ENCODE measurements at regions of chr3 and their contacts with region 1.

Region 1: GRCh38 chr3:71875461-71875947 is 90.6 kb upstream of the PROK2 start:
- DNase-seq: peak; percentile 79
- H3K4me3 Mint-ChIP-seq: no peak overlapping the region
- H3K27ac Mint-ChIP-seq: no peak overlapping the region
- H3K4me1 Mint-ChIP-seq: no peaks in the 10 kb centered on the region
- H3K27me3 Mint-ChIP-seq: peaks cover 4% of the 10 kb centered on the region
- CTCF ChIP-seq: peak; percentile 87

Region 2: GRCh38 chr3:71657831-71658530 is 217.5 kb before region 1 on chr3:
- CTCF ChIA-PET with region 1: no interaction called
- POLR2A ChIA-PET with region 1: no interaction called
- intact Hi-C with region 1: no loop called
- DNase-seq: peak; percentile 97
- H3K4me3 Mint-ChIP-seq: peak overlapping the region; percentile 56
- H3K27ac Mint-ChIP-seq: peak overlapping the region; percentile 82
- H3K4me1 Mint-ChIP-seq: peaks cover 16% of the 10 kb centered on the region
- H3K27me3 Mint-ChIP-seq: no peaks in the 10 kb centered on the region
- CTCF ChIP-seq: no peak

Region 3: GRCh38 chr3:71742621-71743020 is 132.9 kb before region 1 on chr3:
- CTCF ChIA-PET with region 1: no interaction called
- POLR2A ChIA-PET with region 1: no interaction called
- intact Hi-C with region 1: no loop called
- DNase-seq: no peak
- H3K4me3 Mint-ChIP-seq: no peak overlapping the region
- H3K27ac Mint-ChIP-seq: no peak overlapping the region
- H3K4me1 Mint-ChIP-seq: no peaks in the 10 kb centered on the region
- H3K27me3 Mint-ChIP-seq: peaks cover 19% of the 10 kb centered on the region
- CTCF ChIP-seq: no peak

Region 4: DNA sequence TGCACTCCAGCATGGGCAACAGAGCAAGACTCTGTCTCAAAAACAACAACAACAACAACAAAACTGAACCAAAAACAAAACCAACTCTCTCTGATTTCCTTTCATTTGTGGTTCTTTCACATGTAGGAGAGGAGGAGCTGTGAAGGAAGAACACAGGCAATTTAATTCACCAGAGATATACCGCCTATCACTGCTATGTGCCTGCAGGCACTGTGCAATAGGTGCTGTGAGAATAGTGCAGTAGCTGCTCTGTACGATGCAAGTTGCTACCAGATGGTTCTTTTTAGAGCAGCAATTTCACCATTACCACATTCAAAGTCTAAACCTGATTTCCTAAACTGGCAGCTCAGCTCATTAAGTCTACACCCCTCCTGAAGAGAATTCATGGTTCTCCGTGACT is 79.2 kb before region 1 on chr3:
- CTCF ChIA-PET with region 1: no interaction called
- POLR2A ChIA-PET with region 1: no interaction called
- intact Hi-C with region 1: no loop called
- DNase-seq: no peak
- H3K4me3 Mint-ChIP-seq: no peak overlapping the region
- H3K27ac Mint-ChIP-seq: no peak overlapping the region
- H3K4me1 Mint-ChIP-seq: no peaks in the 10 kb centered on the region
- H3K27me3 Mint-ChIP-seq: peaks cover 63% of the 10 kb centered on the region
- CTCF ChIP-seq: no peak

Region 5: DNA sequence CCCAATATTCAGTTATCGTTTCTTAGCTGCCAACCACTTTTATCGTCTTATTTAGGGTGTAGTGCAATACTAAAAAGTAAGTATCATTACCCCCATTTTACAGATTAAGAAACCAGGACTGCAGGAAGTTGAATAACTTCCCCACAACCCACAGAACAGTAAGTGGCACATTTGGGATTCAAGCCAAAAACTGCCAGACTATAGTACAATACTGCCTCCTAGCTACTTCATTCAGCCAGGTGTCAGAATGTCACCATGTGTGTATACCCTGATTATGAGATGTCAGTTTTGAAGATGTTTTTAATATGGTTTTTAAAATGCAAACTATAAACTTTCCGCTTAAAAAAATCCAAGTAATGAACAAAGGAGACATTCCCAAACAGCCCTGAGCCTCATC is 16.4 kb before region 1 on chr3:
- CTCF ChIA-PET with region 1: interaction called, 51 read pairs
- POLR2A ChIA-PET with region 1: no interaction called
- intact Hi-C with region 1: no loop called
- DNase-seq: peak; percentile 80
- H3K4me3 Mint-ChIP-seq: no peak overlapping the region
- H3K27ac Mint-ChIP-seq: no peak overlapping the region
- H3K4me1 Mint-ChIP-seq: no peaks in the 10 kb centered on the region
- H3K27me3 Mint-ChIP-seq: peaks cover 44% of the 10 kb centered on the region
- CTCF ChIP-seq: peak; percentile 35

Region 6: GRCh38 chr3:71896751-71897150 is 21.2 kb after region 1 on chr3:
- CTCF ChIA-PET with region 1: interaction called, 59 read pairs
- POLR2A ChIA-PET with region 1: interaction called, 6 read pairs
- intact Hi-C with region 1: no loop called
- DNase-seq: peak; percentile 22
- H3K4me3 Mint-ChIP-seq: no peak overlapping the region
- H3K27ac Mint-ChIP-seq: no peak overlapping the region
- H3K4me1 Mint-ChIP-seq: peaks cover 15% of the 10 kb centered on the region
- H3K27me3 Mint-ChIP-seq: peaks cover 12% of the 10 kb centered on the region
- CTCF ChIP-seq: no peak

Region 7: GRCh38 chr3:71949442-71949841 is 73.9 kb after region 1 on chr3:
- CTCF ChIA-PET with region 1: interaction called, 13 read pairs
- POLR2A ChIA-PET with region 1: interaction called, 3 read pairs
- intact Hi-C with region 1: no loop called
- DNase-seq: no peak
- H3K4me3 Mint-ChIP-seq: no peak overlapping the region
- H3K27ac Mint-ChIP-seq: no peak overlapping the region
- H3K4me1 Mint-ChIP-seq: no peaks in the 10 kb centered on the region
- H3K27me3 Mint-ChIP-seq: peaks cover 60% of the 10 kb centered on the region
- CTCF ChIP-seq: no peak

Region 8: DNA sequence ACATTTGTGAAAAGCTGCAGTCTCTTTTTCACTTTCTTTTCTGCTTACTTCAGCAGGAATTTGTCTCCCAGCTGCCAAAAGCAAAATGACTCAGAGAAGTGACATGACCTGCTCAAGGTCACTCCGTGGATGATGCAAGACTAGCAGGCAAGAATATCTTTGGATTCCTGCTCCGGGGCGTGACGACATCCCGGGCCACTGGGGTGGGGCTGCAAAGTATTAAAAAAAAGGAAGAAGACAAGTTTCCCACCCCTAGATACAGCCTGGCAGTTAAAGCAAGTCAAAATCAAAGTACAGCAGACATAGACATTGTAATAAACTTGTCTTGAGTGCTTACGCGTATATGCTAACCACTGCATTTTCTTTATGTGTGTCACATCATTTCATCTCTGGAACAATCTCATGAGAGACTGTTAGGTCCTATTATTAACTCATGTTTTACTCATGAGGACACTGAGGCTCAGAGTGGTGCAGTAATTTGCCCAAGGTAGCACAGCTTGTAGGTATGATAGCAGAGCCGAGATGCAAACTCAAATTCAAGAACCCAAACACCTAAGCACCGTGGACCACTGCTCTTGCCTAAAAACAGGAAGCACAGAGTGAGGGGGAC is 394.7 kb after region 1 on chr3:
- CTCF ChIA-PET with region 1: interaction called, 7 read pairs
- POLR2A ChIA-PET with region 1: no interaction called
- intact Hi-C with region 1: loop called (anchors 1 kb)
- DNase-seq: peak; percentile 93
- H3K4me3 Mint-ChIP-seq: peak overlapping the region; percentile 15
- H3K27ac Mint-ChIP-seq: peak overlapping the region; percentile 88
- H3K4me1 Mint-ChIP-seq: peaks cover 32% of the 10 kb centered on the region
- H3K27me3 Mint-ChIP-seq: peaks cover 7% of the 10 kb centered on the region
- CTCF ChIP-seq: no peak

Region 9: GRCh38 chr3:73086071-73086494 is 1210.6 kb after region 1 on chr3:
- CTCF ChIA-PET with region 1: interaction called, 4 read pairs
- POLR2A ChIA-PET with region 1: no interaction called
- intact Hi-C with region 1: loop called (anchors 2 kb)
- DNase-seq: peak; percentile 54
- H3K4me3 Mint-ChIP-seq: no peak overlapping the region
- H3K27ac Mint-ChIP-seq: no peak overlapping the region
- H3K4me1 Mint-ChIP-seq: no peaks in the 10 kb centered on the region
- H3K27me3 Mint-ChIP-seq: no peaks in the 10 kb centered on the region
- CTCF ChIP-seq: peak; percentile 78

Measured in MCF 10A (cell line).